Aorta (tissue), 5 donors: ENCODE measurements at regions of chr10 and their contacts with region 1.

Region 1: DNA sequence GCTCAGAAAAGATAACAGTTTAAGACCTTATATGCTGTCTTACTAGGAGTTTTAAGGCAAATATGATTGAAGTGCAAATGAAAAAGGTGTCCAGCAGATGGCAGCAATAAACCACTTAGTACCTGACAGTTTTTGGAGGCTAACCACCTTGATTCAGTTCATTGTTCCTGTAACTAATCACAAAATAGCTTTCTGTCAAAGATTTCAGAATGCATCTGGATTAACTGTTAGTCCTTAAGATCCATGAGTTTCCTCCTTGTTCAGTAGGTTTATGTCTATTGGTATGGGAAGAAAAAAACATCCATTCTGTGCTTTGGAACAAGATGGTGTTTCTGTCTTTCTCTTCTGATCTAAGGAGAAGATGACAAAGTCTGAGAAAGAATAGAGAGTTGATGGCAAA is 46.6 kb downstream of the CCSER2 start:
- DNase-seq: no peak
- ATAC-seq: no peak
- H3K4me3 ChIP-seq: no peak overlapping the region
- H3K27ac ChIP-seq: no peak overlapping the region
- H3K4me1 ChIP-seq: peaks cover 0 to 1% of the 10 kb centered on the region in 2 donors
- H3K27me3 ChIP-seq: no peaks in the 10 kb centered on the region

Region 2: DNA sequence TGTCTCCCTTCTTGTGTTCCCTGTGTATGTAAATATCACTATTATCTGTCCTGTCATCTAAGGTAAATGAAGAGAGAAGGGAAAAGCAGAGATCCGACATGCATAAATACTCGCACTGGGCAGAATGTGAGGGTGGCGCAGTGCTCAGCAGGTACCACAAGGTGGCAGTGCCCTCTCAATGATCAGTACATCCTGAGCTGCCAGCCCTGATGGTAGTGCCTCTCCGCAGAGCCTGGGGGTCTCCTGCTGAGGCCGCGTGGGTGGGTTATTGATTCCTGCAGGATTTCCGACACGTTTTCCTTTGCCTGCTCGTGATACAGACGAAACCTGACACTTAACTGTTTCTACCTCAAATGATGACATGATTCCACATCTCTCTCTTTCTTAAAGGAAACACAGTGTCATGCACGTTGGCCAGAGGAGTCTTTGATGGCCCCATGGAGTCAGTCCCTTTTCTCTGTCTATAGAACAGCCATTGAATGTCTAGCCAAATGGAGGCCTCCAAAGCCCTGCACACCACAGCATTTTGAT is 110.3 kb before region 1 on chr10:
- intact Hi-C with region 1: loop called (anchors 5 kb)
- DNase-seq: peak; percentile 75 to 89
- ATAC-seq: peak; percentile 82
- H3K4me3 ChIP-seq: no peak overlapping the region
- H3K27ac ChIP-seq: no peak overlapping the region
- H3K4me1 ChIP-seq: no peaks in the 10 kb centered on the region
- H3K27me3 ChIP-seq: no peaks in the 10 kb centered on the region